Activated CD8-positive, alpha-beta T cell treated with anti-CD3 and anti-CD28 coated beads, Interleukin-2, amount 10 ng/mL, durations not matched to agents 7 days and 5 days (primary cell): ENCODE measurements at regions of chr6 and their contacts with region 1.

Region 1: GRCh38 chr6:26045065-26045927 is 41.9 kb upstream of the HFE start:
- DNase-seq: peak; percentile 91
- ATAC-seq: peak; percentile 55
- H3K4me3 Mint-ChIP-seq: peak overlapping the region; percentile 88
- H3K27ac Mint-ChIP-seq: peak overlapping the region; percentile 99
- H3K4me1 Mint-ChIP-seq: peaks cover 43% of the 10 kb centered on the region
- H3K27me3 Mint-ChIP-seq: no peaks in the 10 kb centered on the region

Region 2: GRCh38 chr6:26025894-26026832 is 19.1 kb before region 1 on chr6:
- CTCF ChIA-PET with region 1: interaction called, 57 read pairs
- POLR2A ChIA-PET with region 1: interaction called, 1,951 read pairs
- DNase-seq: peak; percentile 97
- ATAC-seq: peak; percentile 42
- H3K4me3 Mint-ChIP-seq: peak overlapping the region; percentile 86
- H3K27ac Mint-ChIP-seq: peak overlapping the region; percentile 99
- H3K4me1 Mint-ChIP-seq: peaks cover 86% of the 10 kb centered on the region
- H3K27me3 Mint-ChIP-seq: peaks cover 3% of the 10 kb centered on the region

Region 3: DNA sequence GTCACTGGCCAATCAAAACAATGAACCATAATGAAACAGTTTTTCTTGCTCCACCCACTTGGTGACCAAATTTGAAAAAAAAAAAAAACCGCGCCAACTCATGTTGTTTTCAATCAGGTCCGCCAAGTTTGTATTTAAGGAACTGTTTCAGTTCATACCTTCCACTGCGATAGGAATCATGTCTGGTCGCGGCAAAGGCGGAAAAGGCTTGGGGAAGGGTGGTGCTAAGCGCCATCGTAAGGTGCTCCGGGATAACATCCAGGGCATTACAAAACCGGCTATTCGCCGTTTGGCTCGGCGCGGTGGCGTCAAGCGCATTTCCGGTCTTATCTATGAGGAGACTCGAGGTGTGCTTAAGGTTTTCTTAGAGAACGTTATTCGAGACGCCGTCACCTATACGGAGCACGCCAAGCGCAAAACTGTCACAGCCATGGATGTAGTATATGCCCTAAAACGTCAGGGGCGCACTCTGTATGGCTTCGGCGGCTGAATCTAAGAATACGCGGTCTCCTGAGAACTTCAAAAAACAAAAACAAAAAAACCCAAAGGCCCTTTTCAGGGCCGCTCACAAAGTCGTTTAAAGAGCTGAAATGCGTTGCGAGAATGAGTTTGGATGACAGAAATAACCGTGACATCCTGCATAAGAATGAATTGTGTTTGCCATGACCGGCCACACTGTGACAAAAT is 58.6 kb after region 1 on chr6:
- CTCF ChIA-PET with region 1: interaction called, 11 read pairs
- POLR2A ChIA-PET with region 1: interaction called, 76 read pairs
- DNase-seq: peak; percentile 93
- ATAC-seq: peak; percentile 89
- H3K4me3 Mint-ChIP-seq: peak overlapping the region; percentile 85
- H3K27ac Mint-ChIP-seq: peak overlapping the region; percentile 98
- H3K4me1 Mint-ChIP-seq: peaks cover 26% of the 10 kb centered on the region
- H3K27me3 Mint-ChIP-seq: peaks cover 2% of the 10 kb centered on the region

Region 4: GRCh38 chr6:26204332-26205165 is 159.3 kb after region 1 on chr6:
- CTCF ChIA-PET with region 1: no interaction called
- POLR2A ChIA-PET with region 1: interaction called, 213 read pairs
- DNase-seq: peak; percentile 95
- ATAC-seq: peak; percentile 66
- H3K4me3 Mint-ChIP-seq: no peak overlapping the region
- H3K27ac Mint-ChIP-seq: no peak overlapping the region
- H3K4me1 Mint-ChIP-seq: peaks cover 41% of the 10 kb centered on the region
- H3K27me3 Mint-ChIP-seq: no peaks in the 10 kb centered on the region

Region 5: GRCh38 chr6:27132532-27133280 is 1087.4 kb after region 1 on chr6:
- CTCF ChIA-PET with region 1: no interaction called
- POLR2A ChIA-PET with region 1: interaction called, 52 read pairs
- DNase-seq: peak; percentile 95
- ATAC-seq: peak; percentile 76
- H3K4me3 Mint-ChIP-seq: no peak overlapping the region
- H3K27ac Mint-ChIP-seq: no peak overlapping the region
- H3K4me1 Mint-ChIP-seq: peaks cover 68% of the 10 kb centered on the region
- H3K27me3 Mint-ChIP-seq: no peaks in the 10 kb centered on the region

Region 6: GRCh38 chr6:27838058-27838944 is 1793.0 kb after region 1 on chr6:
- CTCF ChIA-PET with region 1: no interaction called
- POLR2A ChIA-PET with region 1: interaction called, 26 read pairs
- DNase-seq: peak; percentile 92
- ATAC-seq: peak; percentile 78
- H3K4me3 Mint-ChIP-seq: no peak overlapping the region
- H3K27ac Mint-ChIP-seq: no peak overlapping the region
- H3K4me1 Mint-ChIP-seq: peaks cover 33% of the 10 kb centered on the region
- H3K27me3 Mint-ChIP-seq: no peaks in the 10 kb centered on the region